ENCODE measurements at regions of chr19 and their contacts with region 1.

Region 1: GRCh38 chr19:6273701-6274601 is 5.8 kb downstream of the MLLT1 start:
- DNase-seq: peak; percentile 74
- H3K4me3 ChIP-seq: peak overlapping the region; percentile 15 to 54
- H3K27ac ChIP-seq: peak overlapping the region; percentile 82 to 99
- H3K4me1 ChIP-seq: peaks cover 44 to 93% of the 10 kb centered on the region in 2 experiments
- H3K27me3 ChIP-seq: no peaks in the 10 kb centered on the region
- CTCF ChIP-seq: no peak
- EP300 ChIP-seq: no peak
- RAD21 ChIP-seq: no peak

Region 2: GRCh38 chr19:6238643-6239281 is 35.2 kb before region 1 on chr19:
- CTCF ChIA-PET with region 1: interaction called, 13 read pairs
- POLR2A ChIA-PET with region 1: interaction called, 4 read pairs
- DNase-seq: no peak
- H3K4me3 ChIP-seq: no peak overlapping the region; a peak in 1 of 4 replicates
- H3K27ac ChIP-seq: peak overlapping the region; percentile 20 to 94; a peak in 3 of 4 replicates
- H3K4me1 ChIP-seq: peaks cover 11 to 91% of the 10 kb centered on the region in 2 experiments; a peak in 2 of 4 replicates
- H3K27me3 ChIP-seq: no peaks in the 10 kb centered on the region
- CTCF ChIP-seq: no peak
- EP300 ChIP-seq: no peak
- RAD21 ChIP-seq: no peak

Region 3: DNA sequence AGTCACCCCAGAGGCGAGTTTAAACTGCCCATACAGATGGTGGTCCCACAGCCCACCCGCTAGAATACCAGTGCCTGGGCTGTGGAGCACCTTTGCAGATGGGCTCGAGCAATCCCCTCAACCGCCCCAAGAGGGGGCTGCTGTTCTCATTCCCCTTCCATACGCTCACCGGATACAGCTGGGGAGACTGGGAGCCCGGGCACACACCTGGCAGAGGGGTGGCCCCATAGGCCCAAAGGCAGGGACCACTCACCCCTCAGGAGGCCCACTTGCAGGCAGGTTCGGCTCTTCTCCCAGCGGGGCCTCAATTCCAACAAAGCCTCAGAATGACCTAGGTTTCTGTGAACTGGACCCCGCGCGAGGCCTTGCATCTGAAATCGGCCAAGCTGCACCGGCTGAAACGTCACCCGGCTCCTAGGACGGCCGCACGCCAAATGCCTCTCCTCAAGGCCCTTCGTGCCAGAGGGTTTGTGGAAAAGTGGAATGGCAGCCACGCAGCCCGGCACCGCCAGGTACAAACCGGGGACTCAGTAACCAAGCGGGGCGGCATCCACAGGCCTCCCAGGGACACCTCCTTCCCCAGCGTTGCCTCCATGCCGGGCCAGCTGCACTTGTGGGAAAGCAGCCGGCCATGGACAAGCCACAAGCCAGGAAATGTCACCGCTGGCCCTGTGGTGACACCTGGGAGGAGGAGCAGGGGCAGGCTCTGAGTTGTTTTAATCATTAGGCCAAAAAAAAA is 12.9 kb before region 1 on chr19:
- CTCF ChIA-PET with region 1: interaction called, 24 read pairs
- POLR2A ChIA-PET with region 1: no interaction called
- DNase-seq: peak; percentile 84
- H3K4me3 ChIP-seq: no peak overlapping the region; a peak in 1 of 4 replicates
- H3K27ac ChIP-seq: no peak overlapping the region
- H3K4me1 ChIP-seq: peaks cover 0 to 7% of the 10 kb centered on the region in 2 experiments; a peak in 1 of 4 replicates
- H3K27me3 ChIP-seq: no peaks in the 10 kb centered on the region
- CTCF ChIP-seq: peak; percentile 63
- EP300 ChIP-seq: no peak
- RAD21 ChIP-seq: peak; percentile 58

Measured in SK-N-SH (cell line).